Psoas muscle (tissue), 8 donors: ENCODE measurements at regions of chr1 and their contacts with region 1.

Region 1: DNA sequence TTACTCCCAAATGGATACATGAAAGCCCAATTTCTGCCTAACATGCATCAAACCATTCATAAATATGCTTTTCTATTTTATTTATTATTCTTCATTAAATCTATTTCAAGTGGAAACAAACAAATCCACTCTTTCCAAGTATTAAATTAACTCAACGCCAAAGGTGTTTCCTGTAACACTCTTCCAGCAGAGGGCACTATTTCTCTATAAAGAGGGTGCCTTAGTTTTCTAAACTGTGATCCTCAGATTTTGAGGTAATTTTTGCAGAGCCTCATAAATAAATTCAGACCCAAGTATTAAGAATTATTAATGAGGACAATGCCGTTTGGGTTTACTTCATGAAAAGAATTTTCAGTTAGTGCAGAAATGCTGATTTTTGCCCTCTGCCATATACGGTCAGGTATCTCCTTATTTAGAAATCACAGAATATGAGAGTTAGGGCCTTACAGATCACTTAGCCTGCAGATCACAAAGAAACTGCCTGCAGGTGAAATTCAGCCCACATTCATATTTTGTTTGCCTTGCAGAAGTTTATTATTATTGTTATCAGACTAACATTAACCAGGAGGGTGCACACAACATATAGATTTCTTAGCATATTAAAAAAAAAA is 40.1 kb upstream of the MYSM1 start:
- DNase-seq: no peak
- ATAC-seq: peak; percentile 56 to 88 (median 66)
- H3K4me3 ChIP-seq: no peak overlapping the region
- H3K27ac ChIP-seq: no peak overlapping the region
- H3K4me1 ChIP-seq: no peaks in the 10 kb centered on the region
- H3K27me3 ChIP-seq: no peaks in the 10 kb centered on the region
- CTCF ChIP-seq: peak; percentile 94

Region 2: DNA sequence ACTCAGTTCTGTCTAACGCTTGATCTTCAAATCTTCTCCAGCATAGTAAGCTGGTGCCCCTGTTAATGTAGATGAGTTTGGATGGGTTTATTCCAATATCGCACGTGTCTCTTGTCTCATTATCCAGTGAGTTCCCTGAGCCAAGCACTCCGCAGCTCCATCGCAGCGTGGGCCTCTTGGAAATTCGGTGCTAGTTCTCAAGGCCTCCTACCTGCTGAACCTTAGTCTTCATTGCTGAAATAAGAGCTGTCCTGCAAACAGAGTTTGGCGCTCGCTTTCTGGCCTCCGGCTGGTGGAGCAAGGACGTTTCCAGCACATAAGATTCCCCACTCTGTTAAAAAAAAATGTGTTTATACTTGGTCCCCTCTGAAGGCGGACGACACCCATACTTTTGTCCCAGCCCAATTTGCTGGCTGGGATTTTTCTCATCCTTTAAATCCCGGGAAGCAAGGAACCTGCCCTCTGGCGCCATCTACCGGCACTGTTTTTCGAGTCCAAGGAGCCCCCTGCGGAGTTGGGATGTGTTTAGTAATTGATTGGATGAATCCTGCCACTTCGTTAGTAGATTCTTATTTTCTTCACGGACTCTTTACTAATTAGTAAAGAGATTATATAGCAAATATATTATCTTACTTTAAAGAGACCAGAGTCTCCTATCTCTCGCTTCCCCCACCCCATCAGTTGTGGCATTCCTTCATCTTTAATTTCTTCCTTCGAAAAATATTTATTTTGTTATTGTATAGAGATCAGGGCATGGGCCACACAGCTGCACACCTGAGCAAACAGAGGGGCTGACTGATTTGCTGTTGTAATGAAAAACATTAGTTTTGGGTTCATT is 29.2 kb after region 1 on chr1:
- intact Hi-C with region 1: loop called (anchors 1 to 2 kb)
- DNase-seq: peak; percentile 80 to 86
- ATAC-seq: peak; percentile 43 to 79 (median 58)
- H3K4me3 ChIP-seq: no peak overlapping the region
- H3K27ac ChIP-seq: no peak overlapping the region
- H3K4me1 ChIP-seq: peaks cover 25% of the 10 kb centered on the region
- H3K27me3 ChIP-seq: no peaks in the 10 kb centered on the region
- CTCF ChIP-seq: peak; percentile 91

Region 3: DNA sequence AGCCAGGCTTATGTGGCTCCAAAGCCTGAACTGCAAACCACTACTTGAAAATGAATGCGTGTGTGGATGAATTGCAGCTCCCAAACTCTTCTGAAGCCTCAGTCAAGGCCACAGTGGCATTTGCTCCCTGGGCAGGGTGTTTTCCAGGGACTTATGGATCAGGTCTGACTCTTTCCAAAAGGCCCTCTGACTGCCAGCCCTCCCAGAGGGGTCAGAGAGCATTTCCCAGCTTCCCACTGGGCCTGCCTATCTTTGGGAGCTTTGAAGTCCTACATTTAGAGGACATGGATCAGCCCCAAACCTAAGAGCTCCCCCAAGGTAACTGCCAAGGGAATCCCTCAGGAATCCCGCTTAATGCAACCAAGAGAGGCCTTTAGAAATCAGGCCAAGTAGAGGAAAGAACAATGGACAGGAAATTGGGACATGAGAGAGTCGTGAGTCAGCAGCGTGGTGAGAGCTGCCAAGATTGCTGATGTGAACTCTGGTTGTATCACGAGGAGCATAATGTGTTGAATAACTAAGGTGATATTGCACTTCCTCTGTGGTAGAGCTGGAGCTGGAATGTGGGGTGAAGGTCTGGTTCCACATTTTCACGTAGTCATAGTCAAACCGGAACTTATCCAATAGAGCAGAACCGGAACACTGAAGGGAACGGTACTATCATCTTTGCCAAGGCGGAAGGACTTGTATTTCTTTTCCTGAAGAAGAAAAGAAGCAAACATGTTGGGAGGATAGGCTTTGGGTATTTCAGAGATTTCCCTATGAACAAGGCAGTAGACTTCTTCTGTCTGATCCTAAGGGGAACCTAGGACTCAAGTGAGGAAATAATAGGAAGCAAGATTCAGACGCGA is 143.3 kb after region 1 on chr1:
- intact Hi-C with region 1: no loop called
- DNase-seq: peak; percentile 83 to 87
- ATAC-seq: peak; percentile 64 to 84 (median 69)
- H3K4me3 ChIP-seq: no peak overlapping the region
- H3K27ac ChIP-seq: peak overlapping the region; percentile 88
- H3K4me1 ChIP-seq: peaks cover 64% of the 10 kb centered on the region
- H3K27me3 ChIP-seq: no peaks in the 10 kb centered on the region
- CTCF ChIP-seq: no peak

Region 4: DNA sequence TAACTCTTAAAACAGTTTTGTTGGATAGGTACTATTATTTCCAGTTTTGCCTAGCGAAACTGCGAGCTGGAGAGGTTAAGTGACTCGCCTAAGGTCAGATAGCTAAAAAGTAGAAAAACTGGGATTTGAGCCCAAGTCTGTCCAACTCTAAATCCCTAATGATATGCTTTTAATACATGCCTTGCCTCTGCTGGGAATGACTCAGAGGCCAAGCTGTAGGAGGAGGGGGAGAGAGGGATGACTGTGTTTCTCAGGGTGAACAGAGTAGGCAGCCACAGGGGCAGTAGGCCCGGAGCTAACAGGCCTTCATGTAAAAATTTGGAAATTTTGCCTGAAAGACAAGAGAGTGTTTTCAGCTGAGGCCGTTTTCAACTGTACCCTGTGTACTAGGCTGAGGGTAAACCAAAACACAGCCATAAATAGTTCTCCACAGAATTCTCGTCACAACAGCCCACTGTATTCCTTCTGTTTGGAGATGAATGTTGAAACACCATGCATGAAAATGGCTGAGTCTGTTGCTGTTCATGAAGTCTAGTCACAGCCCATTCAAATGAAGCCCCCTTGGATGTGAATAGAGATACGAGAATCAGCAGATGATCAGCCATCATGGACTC is 967.3 kb after region 1 on chr1:
- intact Hi-C with region 1: loop called in 1 of 2 experiments (anchors 5 kb)
- DNase-seq: peak; percentile 55 to 69
- ATAC-seq: peak; percentile 75 to 85 (median 82)
- H3K4me3 ChIP-seq: no peak overlapping the region
- H3K27ac ChIP-seq: peak overlapping the region; percentile 78
- H3K4me1 ChIP-seq: peaks cover 55% of the 10 kb centered on the region
- H3K27me3 ChIP-seq: no peaks in the 10 kb centered on the region
- CTCF ChIP-seq: no peak

Region 5: DNA sequence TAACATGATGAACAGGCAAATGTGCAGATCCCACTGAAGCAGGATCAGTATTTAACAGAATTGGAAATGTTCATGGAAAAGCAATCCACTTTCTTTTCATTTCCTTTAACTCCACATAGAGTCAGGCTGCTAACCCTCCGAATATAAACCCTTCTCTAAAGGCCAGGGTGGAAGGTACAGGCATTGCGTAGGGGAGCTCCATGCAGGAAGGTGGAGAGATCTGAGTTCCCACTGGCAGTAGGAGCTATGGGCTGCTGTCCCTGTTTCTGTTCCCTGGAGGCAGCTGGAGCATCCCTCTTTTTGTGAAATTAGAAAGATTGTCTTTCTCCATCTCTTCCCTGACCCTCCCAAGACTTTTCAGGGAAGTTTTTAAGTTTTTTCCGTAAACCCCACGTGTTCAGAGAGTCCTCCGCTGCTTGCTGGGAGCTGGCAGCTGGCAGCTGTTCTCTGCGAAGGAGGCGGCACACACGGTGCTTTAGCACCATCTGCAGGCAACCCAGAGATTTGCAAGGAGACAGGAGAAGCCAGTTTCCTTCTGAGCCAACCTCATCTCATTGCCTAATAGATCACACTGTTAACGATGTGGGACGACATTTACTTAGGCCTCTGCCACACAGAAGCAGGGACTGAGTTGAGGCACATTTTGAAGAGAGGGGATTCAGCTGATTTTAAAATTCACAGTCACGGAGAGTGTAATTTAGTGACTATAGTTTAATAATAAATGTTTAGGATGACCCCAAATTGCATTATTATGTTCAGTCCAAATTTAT is 1019.4 kb after region 1 on chr1:
- intact Hi-C with region 1: loop called (anchors 5 kb)
- DNase-seq: peak; percentile 81 to 92
- ATAC-seq: peak; percentile 96 to 97 (median 97)
- H3K4me3 ChIP-seq: peak overlapping the region; percentile 51
- H3K27ac ChIP-seq: peak overlapping the region; percentile 79
- H3K4me1 ChIP-seq: peaks cover 12% of the 10 kb centered on the region
- H3K27me3 ChIP-seq: no peaks in the 10 kb centered on the region
- CTCF ChIP-seq: peak; percentile 98